ENCODE measurements at regions of chr17 and their contacts with region 1.

Region 1: GRCh38 chr17:47698749-47699535 is 5.0 kb downstream of the TBKBP1 start:
- DNase-seq: peak; percentile 33
- H3K4me3 ChIP-seq: no peak overlapping the region
- H3K27ac ChIP-seq: no peak overlapping the region
- H3K4me1 ChIP-seq: peaks cover 9% of the 10 kb centered on the region
- H3K27me3 ChIP-seq: no peaks in the 10 kb centered on the region
- CTCF ChIP-seq: peak; percentile 62 to 88

Region 2: DNA sequence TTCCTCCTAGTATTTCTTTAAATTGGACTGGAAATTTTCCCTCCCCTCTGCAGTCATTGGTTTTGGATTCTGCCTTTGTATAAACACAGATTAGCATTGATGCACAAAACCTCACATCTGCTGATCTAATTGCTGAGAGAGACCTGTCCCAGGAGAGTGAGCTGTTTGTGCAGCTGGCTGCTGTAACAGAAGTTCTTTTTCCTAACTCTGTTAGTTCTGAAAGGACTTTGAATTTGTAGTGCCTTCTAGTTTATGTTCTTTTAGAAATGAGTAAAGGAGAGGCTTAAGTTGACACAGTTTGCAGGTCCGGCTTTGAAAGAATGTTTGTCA is 94.4 kb before region 1 on chr17:
- CTCF ChIA-PET with region 1: no interaction called
- dilution Hi-C with region 1: no loop called
- in situ Hi-C with region 1: loop called in 1 of 2 experiments (anchors 25 kb)
- intact Hi-C with region 1: no loop called
- DNase-seq: no peak
- H3K4me3 ChIP-seq: no peak overlapping the region
- H3K27ac ChIP-seq: no peak overlapping the region
- H3K4me1 ChIP-seq: no peaks in the 10 kb centered on the region
- H3K27me3 ChIP-seq: no peaks in the 10 kb centered on the region
- CTCF ChIP-seq: no peak

Region 3: GRCh38 chr17:47789611-47790561 is 90.9 kb after region 1 on chr17:
- CTCF ChIA-PET with region 1: no interaction called
- dilution Hi-C with region 1: loop called (anchors 10 kb)
- in situ Hi-C with region 1: no loop called
- intact Hi-C with region 1: loop called (anchors 1 kb)
- DNase-seq: peak; percentile 50
- H3K4me3 ChIP-seq: peak overlapping the region in 2 of 3 experiments; percentile 32 to 34
- H3K27ac ChIP-seq: no peak overlapping the region
- H3K4me1 ChIP-seq: peaks cover 7% of the 10 kb centered on the region
- H3K27me3 ChIP-seq: peaks cover 22% of the 10 kb centered on the region
- CTCF ChIP-seq: peak; percentile 17 to 50